Aorta (tissue), 5 donors: ENCODE measurements at regions of chr19 and their contacts with region 1.

Region 1: DNA sequence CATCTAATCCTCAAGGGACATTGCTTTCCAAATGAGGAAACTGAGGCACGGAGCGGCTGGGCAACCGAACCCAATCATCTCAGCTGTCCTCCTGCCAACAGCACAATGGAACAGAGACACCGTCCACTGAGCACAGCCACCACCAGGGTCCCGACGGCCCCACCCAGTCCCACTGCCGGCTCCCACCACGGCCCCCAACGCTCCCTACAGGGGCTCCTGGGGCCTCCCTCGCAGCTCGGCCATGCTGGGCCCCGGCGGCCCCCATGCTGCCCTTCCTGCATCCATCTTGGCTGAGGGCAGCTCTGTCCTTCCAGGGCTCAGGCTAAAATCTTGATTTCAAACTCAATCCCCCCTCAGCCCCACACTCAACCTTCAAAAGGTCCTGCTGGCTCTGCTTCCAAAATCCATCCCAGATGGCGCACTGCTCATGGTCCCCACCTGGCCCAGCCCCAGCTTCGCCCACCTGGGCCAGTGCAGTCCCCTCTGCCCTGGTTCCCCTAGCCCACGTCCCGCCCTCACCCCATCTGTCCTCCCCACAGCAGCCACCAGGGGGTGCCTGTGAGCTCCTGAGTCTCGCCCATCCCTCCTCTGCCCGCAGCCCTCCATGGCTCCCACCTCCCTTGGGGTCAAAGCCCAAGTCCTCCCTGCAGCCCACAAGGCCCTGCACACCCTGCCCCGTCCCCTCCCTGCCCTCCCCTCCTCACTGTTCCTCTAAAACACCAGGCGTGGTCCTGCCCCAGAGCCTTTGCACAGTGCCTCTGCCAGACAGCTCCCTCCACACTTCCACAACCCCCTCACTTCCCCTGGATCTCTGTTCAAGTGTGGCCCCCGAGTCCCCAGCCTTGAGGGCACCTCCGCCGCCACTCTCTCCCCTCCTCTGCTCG is 7.9 kb downstream of the PIP5K1C start:
- DNase-seq: peak; percentile 58 to 87
- ATAC-seq: no peak
- H3K4me3 ChIP-seq: no peak overlapping the region
- H3K27ac ChIP-seq: peak overlapping the region in 1 of 2 donors; percentile 25
- H3K4me1 ChIP-seq: no peaks in the 10 kb centered on the region
- H3K27me3 ChIP-seq: no peaks in the 10 kb centered on the region

Region 2: GRCh38 chr19:3626473-3627350 is 65.7 kb before region 1 on chr19 and contains the start of gene CACTIN:
- intact Hi-C with region 1: no loop called
- DNase-seq: peak; percentile 99 to 100
- ATAC-seq: peak; percentile 98
- H3K4me3 ChIP-seq: peak within 1 kb of the TSS; percentile 53 to 64
- H3K27ac ChIP-seq: peak within 1 kb of the TSS in 1 of 2 donors; percentile 64
- H3K4me1 ChIP-seq: no peaks in the 10 kb centered on the region
- H3K27me3 ChIP-seq: no peaks in the 10 kb centered on the region
- total RNA-seq, gene CACTIN: 16.4 to 19.3 TPM

Region 3: GRCh38 chr19:3670796-3671679 is 21.3 kb before region 1 on chr19:
- intact Hi-C with region 1: loop called in 1 of 2 experiments (anchors 2 kb)
- DNase-seq: peak; percentile 89 to 96
- ATAC-seq: peak; percentile 84
- H3K4me3 ChIP-seq: peak overlapping the region in 1 of 2 donors; percentile 15
- H3K27ac ChIP-seq: peak overlapping the region; percentile 91 to 98
- H3K4me1 ChIP-seq: no peaks in the 10 kb centered on the region
- H3K27me3 ChIP-seq: no peaks in the 10 kb centered on the region